B cell (primary cell): ENCODE measurements at regions of chr15 and their contacts with region 1.

Region 1: GRCh38 chr15:75029378-75030022 is 6.1 kb downstream of the PPCDC start:
- DNase-seq: peak; percentile 90
- ATAC-seq: peak; percentile 98
- H3K4me3 ChIP-seq: peak overlapping the region in 1 of 5 experiments; percentile 9
- H3K4me3 Mint-ChIP-seq: no peak overlapping the region
- H3K27ac ChIP-seq: no peak overlapping the region
- H3K27ac Mint-ChIP-seq: no peak overlapping the region
- H3K4me1 ChIP-seq: peaks cover 12 to 25% of the 10 kb centered on the region in 2 donors
- H3K4me1 Mint-ChIP-seq: peaks cover 17% of the 10 kb centered on the region
- H3K27me3 ChIP-seq: peaks cover 0 to 8% (median 0%) of the 10 kb centered on the region in 4 experiments
- H3K27me3 Mint-ChIP-seq: no peaks in the 10 kb centered on the region
- CTCF ChIP-seq: peak; percentile 91

Region 2: DNA sequence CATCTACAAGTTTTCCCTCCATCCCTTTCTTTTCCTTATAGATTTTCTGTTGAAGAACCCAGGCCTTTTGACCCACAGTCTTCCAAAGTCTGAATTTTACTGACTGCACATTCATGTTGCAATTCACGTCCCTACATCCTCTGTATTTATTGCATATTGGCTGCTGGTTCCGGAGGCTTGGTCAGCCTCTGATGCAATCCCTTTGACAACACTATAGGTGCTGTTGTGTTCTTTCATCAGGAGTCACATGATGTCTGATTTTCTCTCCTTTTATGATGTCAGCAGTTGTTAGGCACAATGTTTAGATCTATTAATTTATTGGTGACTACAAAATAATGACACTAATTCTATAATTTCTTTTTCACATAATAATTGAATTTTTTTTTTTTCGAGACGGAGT is 312.9 kb before region 1 on chr15:
- CTCF ChIA-PET with region 1: no interaction called
- POLR2A ChIA-PET with region 1: no interaction called
- intact Hi-C with region 1: no loop called
- DNase-seq: no peak
- ATAC-seq: no peak
- H3K4me3 ChIP-seq: no peak overlapping the region
- H3K4me3 Mint-ChIP-seq: no peak overlapping the region
- H3K27ac ChIP-seq: no peak overlapping the region
- H3K27ac Mint-ChIP-seq: no peak overlapping the region
- H3K4me1 ChIP-seq: no peaks in the 10 kb centered on the region
- H3K4me1 Mint-ChIP-seq: no peaks in the 10 kb centered on the region
- H3K27me3 ChIP-seq: peaks cover 0 to 2% (median 0%) of the 10 kb centered on the region in 4 experiments
- H3K27me3 Mint-ChIP-seq: peaks cover 5% of the 10 kb centered on the region
- CTCF ChIP-seq: no peak

Region 3: DNA sequence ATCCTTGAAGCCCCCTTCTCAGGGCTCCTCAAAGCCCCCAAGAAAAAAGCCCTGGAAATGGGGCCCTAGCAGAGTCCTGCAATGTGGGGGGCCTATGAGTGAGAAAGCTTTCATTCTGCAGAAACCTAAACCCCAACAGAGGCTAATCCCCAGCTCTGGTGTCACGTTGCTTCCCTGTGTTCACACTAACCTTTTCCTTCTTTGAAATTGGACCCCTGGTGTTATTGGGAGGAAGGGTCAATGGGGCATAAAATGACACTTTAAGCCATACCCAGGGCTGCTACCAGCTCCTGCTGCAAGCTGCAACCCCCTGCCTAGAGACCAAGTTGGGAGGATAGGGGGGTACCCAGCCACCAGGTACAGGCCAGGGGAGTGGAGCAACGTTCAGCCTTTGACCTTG is 278.7 kb before region 1 on chr15:
- CTCF ChIA-PET with region 1: no interaction called
- POLR2A ChIA-PET with region 1: no interaction called
- intact Hi-C with region 1: no loop called
- DNase-seq: no peak
- ATAC-seq: no peak
- H3K4me3 ChIP-seq: no peak overlapping the region
- H3K4me3 Mint-ChIP-seq: no peak overlapping the region
- H3K27ac ChIP-seq: no peak overlapping the region
- H3K27ac Mint-ChIP-seq: no peak overlapping the region
- H3K4me1 ChIP-seq: no peaks in the 10 kb centered on the region
- H3K4me1 Mint-ChIP-seq: no peaks in the 10 kb centered on the region
- H3K27me3 ChIP-seq: no peaks in the 10 kb centered on the region
- H3K27me3 Mint-ChIP-seq: peaks cover 9% of the 10 kb centered on the region
- CTCF ChIP-seq: no peak

Region 4: DNA sequence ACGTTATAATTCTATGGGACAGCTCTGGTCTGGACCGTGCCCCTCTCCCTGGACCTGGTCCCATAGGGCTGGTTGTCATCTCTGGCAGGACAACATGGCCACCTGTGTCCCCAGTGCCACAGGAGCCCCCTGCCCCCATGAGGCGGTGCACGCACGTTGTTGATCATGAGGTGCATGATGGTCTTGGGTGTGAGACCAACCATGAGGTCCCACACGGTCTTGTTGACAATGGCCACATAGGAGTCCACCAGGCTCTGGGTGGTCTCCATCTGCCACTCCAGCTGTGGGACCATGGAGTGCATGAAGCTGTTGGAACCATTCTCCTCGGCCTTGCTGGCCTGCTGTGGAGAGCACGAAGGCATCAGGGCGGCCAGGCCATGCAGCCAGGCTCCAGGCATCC is 272.8 kb after region 1 on chr15:
- CTCF ChIA-PET with region 1: interaction called, 12 read pairs
- POLR2A ChIA-PET with region 1: no interaction called
- intact Hi-C with region 1: no loop called
- DNase-seq: no peak
- ATAC-seq: no peak
- H3K4me3 ChIP-seq: no peak overlapping the region
- H3K4me3 Mint-ChIP-seq: no peak overlapping the region
- H3K27ac ChIP-seq: no peak overlapping the region
- H3K27ac Mint-ChIP-seq: no peak overlapping the region
- H3K4me1 ChIP-seq: no peaks in the 10 kb centered on the region
- H3K4me1 Mint-ChIP-seq: no peaks in the 10 kb centered on the region
- H3K27me3 ChIP-seq: peaks cover 0 to 2% (median under 1%) of the 10 kb centered on the region in 4 experiments
- H3K27me3 Mint-ChIP-seq: peaks cover 29% of the 10 kb centered on the region
- CTCF ChIP-seq: no peak

Region 5: DNA sequence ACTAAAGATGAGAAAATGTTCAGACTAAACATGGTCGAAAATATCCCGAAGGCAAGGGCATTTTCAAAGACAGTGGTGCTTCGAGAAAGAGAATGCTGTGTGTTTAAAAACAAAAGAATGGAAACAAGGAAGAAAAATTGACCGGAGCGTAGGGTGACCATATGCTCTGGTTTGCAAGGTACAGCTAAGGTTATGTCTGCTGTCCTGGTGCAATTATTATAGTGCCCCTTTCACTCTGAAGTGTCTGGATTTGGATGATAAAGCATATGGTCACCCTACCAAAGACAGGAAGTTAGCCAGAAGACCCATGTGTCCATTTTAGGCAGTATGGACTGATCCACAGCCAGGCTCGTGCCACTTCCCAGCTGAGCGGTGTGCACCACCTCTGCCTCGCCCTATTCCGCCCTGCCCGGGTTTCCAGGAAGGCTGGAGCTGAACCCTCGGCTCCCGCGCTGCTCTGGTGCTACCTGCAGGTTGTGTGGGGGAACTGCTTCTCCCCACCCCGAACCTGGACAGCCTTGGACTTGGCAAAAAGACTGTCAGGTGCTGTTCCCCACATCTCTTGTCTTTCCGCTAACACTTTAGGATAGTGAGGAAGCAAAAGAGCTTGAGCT is 278.4 kb after region 1 on chr15:
- CTCF ChIA-PET with region 1: interaction called, 12 read pairs
- POLR2A ChIA-PET with region 1: no interaction called
- intact Hi-C with region 1: no loop called
- DNase-seq: peak; percentile 27
- ATAC-seq: no peak
- H3K4me3 ChIP-seq: no peak overlapping the region
- H3K4me3 Mint-ChIP-seq: no peak overlapping the region
- H3K27ac ChIP-seq: no peak overlapping the region
- H3K27ac Mint-ChIP-seq: no peak overlapping the region
- H3K4me1 ChIP-seq: no peaks in the 10 kb centered on the region
- H3K4me1 Mint-ChIP-seq: no peaks in the 10 kb centered on the region
- H3K27me3 ChIP-seq: peaks cover 0 to 13% (median 4%) of the 10 kb centered on the region in 4 experiments
- H3K27me3 Mint-ChIP-seq: peaks cover 53% of the 10 kb centered on the region
- CTCF ChIP-seq: peak; percentile 36